ENCODE measurements at regions of chr20 and their contacts with region 1.

Region 1: GRCh38 chr20:41095110-41095969 is 42.0 kb upstream of the PLCG1 start:
- DNase-seq: peak in 9 of 10 donors; percentile 42 to 94 (median 58)

Region 2: GRCh38 chr20:40962730-40963504 is 132.4 kb before region 1 on chr20:
- intact Hi-C with region 1: loop called (anchors 2 kb)
- DNase-seq: peak; percentile 39 to 95 (median 75)

Region 3: DNA sequence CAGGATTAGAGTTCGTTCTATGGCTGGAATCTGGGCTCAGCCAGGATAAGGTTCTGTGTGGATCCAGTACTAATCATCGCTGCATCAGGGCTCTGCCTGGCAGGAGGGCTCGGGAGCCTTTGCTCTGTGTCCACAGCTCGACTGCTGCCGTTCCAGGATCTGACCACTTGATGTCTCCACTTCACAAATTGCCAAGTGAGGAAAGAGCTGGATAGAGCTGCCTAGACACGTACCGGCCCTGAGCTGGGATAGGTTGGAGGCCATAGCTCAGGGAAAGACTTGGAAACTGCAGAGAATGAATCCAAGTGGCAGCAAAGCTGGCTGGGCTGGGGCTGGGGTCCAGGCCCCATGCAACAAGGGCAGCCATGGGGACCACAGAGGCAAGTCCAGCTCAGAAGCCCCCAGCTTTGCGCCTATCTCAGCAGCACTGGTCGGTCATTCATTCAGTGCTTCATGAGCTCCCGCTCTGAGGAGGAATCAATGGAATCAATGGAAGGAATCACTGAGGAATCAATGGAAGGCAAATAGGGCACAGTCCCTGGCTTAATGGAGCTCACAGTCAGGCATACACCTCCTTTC is 104.7 kb before region 1 on chr20:
- intact Hi-C with region 1: loop called (anchors 2 kb)
- DNase-seq: peak; percentile 35 to 96 (median 74)

Region 4: DNA sequence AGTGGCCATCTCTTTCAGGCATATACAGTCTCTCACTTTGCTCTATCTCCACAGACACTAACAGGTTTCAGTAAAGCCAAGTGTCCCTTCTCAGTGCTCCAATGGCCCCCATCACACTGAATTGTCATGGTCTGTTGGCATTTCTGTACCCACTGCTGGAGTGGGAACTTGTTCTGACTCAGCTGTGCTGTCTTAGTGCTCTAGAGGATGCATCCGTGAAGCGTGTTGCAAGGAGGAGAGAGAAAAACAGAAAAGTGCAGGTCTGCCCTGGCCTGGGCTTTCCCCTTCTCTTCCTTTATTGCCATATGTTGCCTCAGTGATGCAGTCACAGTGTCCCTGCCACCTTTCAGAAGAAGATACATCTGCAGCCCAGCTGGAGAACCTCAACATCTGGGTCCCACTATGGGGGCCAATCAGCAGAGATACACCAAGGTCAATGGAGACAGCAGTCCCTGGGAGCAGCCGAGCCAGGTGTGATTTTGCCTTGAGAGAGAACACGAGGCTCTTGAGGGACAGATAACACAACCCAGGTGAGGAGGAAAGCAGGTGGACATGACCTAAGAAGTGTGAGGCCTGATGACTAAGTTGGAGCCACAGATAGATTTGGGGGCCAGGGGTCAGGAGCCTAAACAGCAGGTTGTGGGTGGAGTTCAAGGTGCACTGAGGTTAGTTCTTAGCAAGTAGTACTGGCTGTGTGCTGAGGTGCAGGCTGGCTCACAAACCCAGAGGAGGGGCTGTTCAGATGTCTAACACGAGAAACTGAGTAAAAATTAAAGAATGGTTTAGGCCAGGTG is 36.5 kb after region 1 on chr20:
- intact Hi-C with region 1: no loop called
- DNase-seq: no peak

Region 5: GRCh38 chr20:41218466-41218865 is 123.1 kb after region 1 on chr20:
- intact Hi-C with region 1: no loop called
- DNase-seq: no peak

Measured in posterior cingulate gyrus (tissue), 11 donors.